Naive thymus-derived CD4-positive, alpha-beta T cell (primary cell): ENCODE measurements at regions of chr4 and their contacts with region 1.

Region 1: GRCh38 chr4:88823058-88823919 is 125.7 kb upstream of the NAP1L5 start:
- DNase-seq: peak; percentile 23 to 90 (median 84)
- ATAC-seq: peak; percentile 96
- H3K4me3 ChIP-seq: peak overlapping the region; percentile 62
- H3K4me3 Mint-ChIP-seq: peak overlapping the region; percentile 88 to 99 (median 96)
- H3K27ac ChIP-seq: peak overlapping the region; percentile 83
- H3K27ac Mint-ChIP-seq: peak overlapping the region; percentile 88 to 99 (median 98)
- H3K4me1 ChIP-seq: peaks cover 0 to 13% of the 10 kb centered on the region in 2 donors
- H3K4me1 Mint-ChIP-seq: peaks cover 0 to 46% (median 37%) of the 10 kb centered on the region in 7 donors
- H3K27me3 ChIP-seq: no peaks in the 10 kb centered on the region
- H3K27me3 Mint-ChIP-seq: no peaks in the 10 kb centered on the region

Region 2: DNA sequence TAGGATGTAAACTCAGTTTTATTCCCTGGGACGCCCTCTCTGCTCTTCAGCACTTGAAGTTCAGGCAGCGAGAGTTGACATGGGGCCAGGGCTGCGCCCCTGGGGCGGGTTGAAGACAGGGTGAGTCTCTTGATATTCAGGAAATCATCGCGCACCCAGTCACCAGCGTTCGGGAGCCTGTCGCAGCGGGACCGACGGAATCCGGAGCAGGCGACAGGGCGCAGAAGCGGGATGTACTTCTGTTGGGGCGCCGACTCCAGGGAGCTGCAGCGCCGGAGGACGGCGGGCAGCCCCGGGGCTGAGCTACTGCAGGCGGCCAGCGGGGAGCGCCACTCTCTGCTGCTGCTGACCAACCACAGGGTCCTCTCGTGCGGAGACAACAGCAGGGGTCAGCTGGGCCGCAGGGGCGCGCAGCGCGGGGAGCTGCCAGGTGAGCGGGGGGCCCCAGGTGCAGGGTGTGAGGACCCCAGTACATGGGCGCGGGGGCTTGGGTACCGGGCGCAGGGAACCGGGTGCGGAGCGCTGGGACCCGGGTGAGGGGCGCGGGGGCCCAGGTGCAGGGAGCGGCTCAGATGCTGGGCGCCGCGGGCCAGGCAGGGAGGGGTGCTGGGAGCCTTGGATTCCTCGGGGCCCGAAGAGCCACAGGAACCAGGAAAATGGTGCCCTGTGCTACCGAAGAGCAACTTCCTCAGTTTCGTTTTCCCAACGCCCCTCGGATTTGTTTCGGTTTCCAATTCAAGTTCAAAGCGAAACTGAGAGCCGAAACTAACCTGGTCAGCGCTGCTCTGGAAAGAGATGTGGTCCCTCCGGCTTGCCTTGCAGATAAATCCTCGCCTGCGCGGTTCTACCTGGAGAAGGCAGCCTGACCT is 444.4 kb before region 1 on chr4 and contains the start of gene HERC6:
- CTCF ChIA-PET with region 1: no interaction called
- POLR2A ChIA-PET with region 1: no interaction called
- intact Hi-C with region 1: loop called (anchors 1 to 10 kb)
- DNase-seq: peak; percentile 49 to 77 (median 70)
- ATAC-seq: peak; percentile 80
- H3K4me3 ChIP-seq: peak within 1 kb of the TSS; percentile 95
- H3K4me3 Mint-ChIP-seq: peak within 1 kb of the TSS; percentile 88 to 98 (median 94)
- H3K27ac ChIP-seq: peak within 1 kb of the TSS; percentile 92
- H3K27ac Mint-ChIP-seq: peak within 1 kb of the TSS; percentile 91 to 99 (median 94)
- H3K4me1 ChIP-seq: peaks cover 21 to 27% of the 10 kb centered on the region in 2 donors
- H3K4me1 Mint-ChIP-seq: peaks cover 24 to 60% (median 46%) of the 10 kb centered on the region in 7 donors
- H3K27me3 ChIP-seq: no peaks in the 10 kb centered on the region
- H3K27me3 Mint-ChIP-seq: no peaks in the 10 kb centered on the region
- total RNA-seq, gene HERC6: 12.6 to 43.5 (median 23.0) TPM

Region 3: DNA sequence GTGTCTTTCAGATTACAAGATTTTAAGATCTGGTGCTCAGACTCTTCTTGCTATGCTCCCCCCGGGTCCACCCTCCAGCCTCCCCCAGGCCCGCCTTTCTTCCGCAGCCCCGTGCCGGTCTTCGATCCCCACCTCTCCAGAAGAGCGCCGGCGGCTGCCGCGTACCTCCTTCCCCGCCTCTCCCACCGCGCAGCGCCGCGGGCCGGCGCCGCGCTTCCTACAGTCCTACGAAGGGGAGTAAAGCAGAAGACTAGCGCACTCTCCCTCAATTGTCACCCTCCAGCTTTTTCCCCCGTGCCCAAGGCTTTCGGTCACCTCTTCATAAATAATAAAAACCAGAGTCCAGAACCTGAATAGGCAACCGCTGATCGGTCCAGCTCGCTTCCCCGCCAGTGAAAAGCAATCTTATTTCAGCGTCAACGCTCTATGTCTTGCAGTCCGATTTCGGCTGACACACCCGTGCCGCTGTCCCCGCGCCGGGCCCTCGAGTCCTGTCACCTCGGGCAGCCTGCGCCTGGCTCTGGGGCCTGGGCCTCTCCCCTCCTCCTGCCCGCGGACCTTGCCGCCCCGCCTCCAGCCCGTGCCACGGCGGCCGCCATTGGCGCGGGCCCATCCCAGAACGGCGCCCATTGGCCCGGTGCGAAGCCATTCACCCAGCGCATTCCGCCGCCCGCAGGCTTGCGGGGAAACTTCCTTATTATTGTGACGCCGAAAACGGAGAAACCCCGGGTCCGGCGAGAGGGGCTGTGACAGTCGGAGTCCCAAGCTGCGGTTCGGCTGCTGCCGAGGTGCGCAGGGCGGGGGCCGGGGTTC is 231.3 kb before region 1 on chr4 and contains the start of gene HERC3:
- CTCF ChIA-PET with region 1: no interaction called
- POLR2A ChIA-PET with region 1: interaction called, 4 read pairs
- intact Hi-C with region 1: loop called (anchors 1 kb)
- DNase-seq: peak; percentile 87 to 92 (median 91)
- ATAC-seq: peak; percentile 94
- H3K4me3 ChIP-seq: peak within 1 kb of the TSS; percentile 60
- H3K4me3 Mint-ChIP-seq: peak within 1 kb of the TSS; percentile 94 to 100 (median 98)
- H3K27ac ChIP-seq: peak within 1 kb of the TSS; percentile 93
- H3K27ac Mint-ChIP-seq: peak within 1 kb of the TSS; percentile 83 to 99 (median 97)
- H3K4me1 ChIP-seq: peaks cover 10 to 20% of the 10 kb centered on the region in 2 donors
- H3K4me1 Mint-ChIP-seq: peaks cover 34 to 58% (median 49%) of the 10 kb centered on the region in 7 donors
- H3K27me3 ChIP-seq: no peaks in the 10 kb centered on the region
- H3K27me3 Mint-ChIP-seq: peaks cover 0 to 31% (median 0%) of the 10 kb centered on the region in 5 donors
- total RNA-seq, gene HERC3: 38.1 to 130 (median 104) TPM

Region 4: DNA sequence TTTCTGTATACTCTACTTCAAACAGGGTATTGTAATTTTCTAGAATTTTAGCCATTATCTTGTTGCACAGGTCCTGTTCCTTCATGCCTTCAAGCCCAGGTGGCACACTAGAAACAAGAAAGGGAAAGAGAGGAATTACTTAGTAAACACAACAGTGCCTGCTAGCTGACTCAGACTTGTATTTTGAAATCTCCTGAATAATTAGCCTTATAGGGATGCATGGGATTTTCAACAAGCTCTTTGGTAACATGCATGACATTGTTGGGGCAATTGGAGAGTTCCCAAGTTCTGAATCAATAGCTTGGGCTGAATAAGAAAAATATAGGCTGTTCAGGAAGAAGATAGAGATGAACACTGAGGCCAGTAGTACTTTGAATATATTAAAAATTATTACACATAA is 114.8 kb after region 1 on chr4:
- CTCF ChIA-PET with region 1: no interaction called
- POLR2A ChIA-PET with region 1: no interaction called
- intact Hi-C with region 1: loop called in 1 of 2 experiments (anchors 1 kb)
- DNase-seq: no peak
- ATAC-seq: no peak
- H3K4me3 ChIP-seq: no peak overlapping the region
- H3K4me3 Mint-ChIP-seq: no peak overlapping the region
- H3K27ac ChIP-seq: no peak overlapping the region
- H3K27ac Mint-ChIP-seq: peak overlapping the region in 2 of 9 donors; percentile 15 to 30
- H3K4me1 ChIP-seq: peaks cover 0 to 33% of the 10 kb centered on the region in 2 donors
- H3K4me1 Mint-ChIP-seq: peaks cover 20 to 69% (median 54%) of the 10 kb centered on the region in 7 donors
- H3K27me3 ChIP-seq: no peaks in the 10 kb centered on the region
- H3K27me3 Mint-ChIP-seq: no peaks in the 10 kb centered on the region

Region 5: DNA sequence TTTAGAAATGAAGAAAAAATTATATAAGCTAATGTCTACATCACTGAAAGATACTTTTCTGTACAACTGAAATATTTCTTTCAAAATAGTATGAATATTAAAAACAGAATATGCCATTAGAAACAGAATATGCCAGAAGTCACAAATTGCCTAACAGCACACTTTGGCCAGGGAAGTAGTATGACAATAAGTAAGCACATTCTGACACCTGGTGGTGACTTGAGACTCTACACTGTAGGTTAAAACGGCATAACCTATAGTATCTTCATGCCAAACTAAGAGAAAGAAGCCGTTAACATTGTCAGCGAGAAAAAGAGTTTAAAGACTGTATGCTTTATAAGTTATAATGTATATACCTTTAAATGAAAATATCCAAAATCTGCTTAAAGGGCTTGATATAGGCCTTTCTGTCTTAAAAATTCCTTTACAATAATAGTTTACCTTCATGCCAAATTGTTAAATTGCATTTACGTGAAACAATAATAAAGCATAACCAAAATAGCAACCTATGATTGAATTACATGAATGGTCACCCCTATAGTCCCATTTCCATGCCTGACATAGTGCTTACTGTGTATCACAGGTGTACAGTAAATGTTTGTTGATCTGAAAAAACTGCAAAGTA is 200.9 kb after region 1 on chr4:
- CTCF ChIA-PET with region 1: interaction called, 199 read pairs
- POLR2A ChIA-PET with region 1: interaction called, 18 read pairs
- intact Hi-C with region 1: loop called (anchors 1 kb)
- DNase-seq: peak in 8 of 9 donors; percentile 33 to 80 (median 72)
- ATAC-seq: peak; percentile 99
- H3K4me3 ChIP-seq: no peak overlapping the region
- H3K4me3 Mint-ChIP-seq: no peak overlapping the region
- H3K27ac ChIP-seq: no peak overlapping the region
- H3K27ac Mint-ChIP-seq: no peak overlapping the region
- H3K4me1 ChIP-seq: no peaks in the 10 kb centered on the region
- H3K4me1 Mint-ChIP-seq: peaks cover 0 to 31% (median 6%) of the 10 kb centered on the region in 7 donors
- H3K27me3 ChIP-seq: no peaks in the 10 kb centered on the region
- H3K27me3 Mint-ChIP-seq: peaks cover 0 to 10% (median 0%) of the 10 kb centered on the region in 5 donors

Region 6: GRCh38 chr4:89226665-89227574 is 403.6 kb after region 1 on chr4:
- CTCF ChIA-PET with region 1: no interaction called
- POLR2A ChIA-PET with region 1: no interaction called
- intact Hi-C with region 1: loop called in 1 of 2 experiments (anchors 10 kb)
- DNase-seq: peak; percentile 37 to 79 (median 68)
- ATAC-seq: peak; percentile 93
- H3K4me3 ChIP-seq: peak overlapping the region; percentile 21
- H3K4me3 Mint-ChIP-seq: peak overlapping the region in 9 of 10 donors; percentile 54 to 78 (median 63)
- H3K27ac ChIP-seq: no peak overlapping the region
- H3K27ac Mint-ChIP-seq: peak overlapping the region in 2 of 9 donors; percentile 19 to 34
- H3K4me1 ChIP-seq: no peaks in the 10 kb centered on the region
- H3K4me1 Mint-ChIP-seq: peaks cover 0 to 10% (median 5%) of the 10 kb centered on the region in 7 donors
- H3K27me3 ChIP-seq: no peaks in the 10 kb centered on the region
- H3K27me3 Mint-ChIP-seq: peaks cover 0 to 7% (median 0%) of the 10 kb centered on the region in 5 donors

Region 7: DNA sequence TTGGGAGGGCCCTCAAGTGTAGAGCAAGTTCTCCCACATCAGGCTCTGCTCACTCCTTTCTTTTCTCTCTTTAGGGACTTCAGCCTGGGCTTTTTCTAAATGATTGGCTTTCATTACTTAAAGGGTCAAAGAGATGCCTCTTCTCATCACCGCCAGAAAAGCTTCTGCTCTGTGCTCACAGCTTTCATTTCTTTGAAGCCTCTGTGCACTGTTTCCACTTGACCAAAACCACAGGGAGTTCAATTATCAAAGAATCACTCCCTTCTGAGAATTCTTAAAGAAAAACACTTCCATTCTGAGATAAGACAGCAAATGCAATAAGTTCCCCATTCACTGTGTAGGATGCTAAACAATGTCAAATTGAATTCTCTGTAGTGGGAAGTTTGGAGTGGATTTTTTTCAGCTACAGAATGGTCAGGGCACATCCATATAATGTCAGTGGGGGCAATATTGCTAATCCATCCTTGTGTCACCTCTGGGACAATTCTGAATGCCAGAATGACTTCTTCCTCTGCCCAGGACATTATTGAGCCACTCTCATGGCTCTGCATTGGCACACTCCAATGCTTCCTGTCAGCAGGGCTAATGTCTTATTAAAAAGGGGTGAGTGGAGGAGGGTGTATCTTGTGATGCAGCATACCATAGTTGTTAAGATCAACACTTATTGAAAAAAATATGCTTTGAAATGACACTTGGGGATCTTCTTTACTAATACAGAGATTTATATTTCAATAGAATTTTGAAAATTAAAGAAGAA is 796.1 kb after region 1 on chr4:
- CTCF ChIA-PET with region 1: no interaction called
- POLR2A ChIA-PET with region 1: no interaction called
- intact Hi-C with region 1: loop called in 1 of 2 experiments (anchors 10 kb)
- DNase-seq: peak in 1 of 9 donors; percentile 18
- ATAC-seq: peak; percentile 40
- H3K4me3 ChIP-seq: peak overlapping the region; percentile 16
- H3K4me3 Mint-ChIP-seq: peak overlapping the region in 9 of 10 donors; percentile 26 to 80 (median 62)
- H3K27ac ChIP-seq: no peak overlapping the region
- H3K27ac Mint-ChIP-seq: peak overlapping the region in 8 of 9 donors; percentile 13 to 92 (median 70)
- H3K4me1 ChIP-seq: peaks cover 0 to 14% of the 10 kb centered on the region in 2 donors
- H3K4me1 Mint-ChIP-seq: peaks cover 4 to 46% (median 19%) of the 10 kb centered on the region in 7 donors
- H3K27me3 ChIP-seq: no peaks in the 10 kb centered on the region
- H3K27me3 Mint-ChIP-seq: peaks cover 0 to 3% (median 0%) of the 10 kb centered on the region in 5 donors